OCI-LY7 (cell line): ENCODE measurements at regions of chr15 and their contacts with region 1.

Region 1: GRCh38 chr15:78195735-78196201 is 38.6 kb downstream of the ACSBG1 start:
- DNase-seq: peak; percentile 65
- H3K4me3 ChIP-seq: no peak overlapping the region
- H3K27ac ChIP-seq: no peak overlapping the region
- H3K4me1 ChIP-seq: no peaks in the 10 kb centered on the region
- CTCF ChIP-seq: peak; percentile 95

Region 2: DNA sequence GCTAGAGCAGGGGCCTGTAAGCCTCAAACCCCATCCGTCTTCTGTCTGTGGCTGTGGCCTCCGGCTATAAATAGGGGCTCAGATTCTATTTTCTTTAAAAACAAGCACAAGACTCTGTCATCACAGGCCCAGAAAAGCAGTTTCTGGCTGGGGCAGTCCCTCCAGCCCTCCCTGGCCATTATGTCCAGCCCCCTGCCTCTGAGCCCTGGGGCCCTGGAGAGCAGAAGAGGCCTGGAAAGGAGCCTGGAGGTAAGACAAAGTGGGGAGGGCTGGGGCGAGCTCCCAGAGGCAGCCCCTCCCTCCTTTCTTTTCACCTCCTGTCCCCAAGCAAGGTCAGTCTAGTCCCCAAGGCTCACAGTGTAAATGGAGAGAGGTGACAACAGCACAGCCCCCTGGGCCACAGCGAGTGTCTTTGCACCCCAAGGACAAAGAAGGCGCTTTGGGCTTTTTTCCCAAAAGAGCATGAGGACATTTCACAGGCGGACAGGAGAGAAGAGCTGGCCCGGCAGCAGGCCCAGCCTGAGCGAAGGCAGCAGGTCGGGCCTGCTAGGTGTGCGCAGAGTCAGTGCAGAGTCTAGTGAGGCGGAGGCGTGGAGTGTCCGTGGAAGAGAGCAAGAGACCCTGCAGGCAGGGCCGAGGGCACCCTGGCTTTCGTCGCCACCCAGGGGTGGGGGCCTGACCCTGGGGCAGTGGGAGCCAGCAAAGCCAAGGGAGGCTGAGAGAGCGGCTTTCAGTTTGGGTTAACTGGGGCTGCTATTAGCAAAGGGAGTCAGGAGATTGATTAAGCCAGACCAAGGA is 306.6 kb before region 1 on chr15:
- CTCF ChIA-PET with region 1: no interaction called
- POLR2A ChIA-PET with region 1: no interaction called
- intact Hi-C with region 1: no loop called
- DNase-seq: no peak
- H3K4me3 ChIP-seq: no peak overlapping the region
- H3K27ac ChIP-seq: no peak overlapping the region
- H3K4me1 ChIP-seq: no peaks in the 10 kb centered on the region
- CTCF ChIP-seq: no peak

Region 3: GRCh38 chr15:77959432-77959879 is 236.3 kb before region 1 on chr15:
- CTCF ChIA-PET with region 1: no interaction called
- POLR2A ChIA-PET with region 1: no interaction called
- intact Hi-C with region 1: loop called (anchors 1 kb)
- DNase-seq: peak; percentile 75
- H3K4me3 ChIP-seq: peak overlapping the region; percentile 34
- H3K27ac ChIP-seq: no peak overlapping the region
- H3K4me1 ChIP-seq: peaks cover 14% of the 10 kb centered on the region
- CTCF ChIP-seq: peak; percentile 93

Region 4: DNA sequence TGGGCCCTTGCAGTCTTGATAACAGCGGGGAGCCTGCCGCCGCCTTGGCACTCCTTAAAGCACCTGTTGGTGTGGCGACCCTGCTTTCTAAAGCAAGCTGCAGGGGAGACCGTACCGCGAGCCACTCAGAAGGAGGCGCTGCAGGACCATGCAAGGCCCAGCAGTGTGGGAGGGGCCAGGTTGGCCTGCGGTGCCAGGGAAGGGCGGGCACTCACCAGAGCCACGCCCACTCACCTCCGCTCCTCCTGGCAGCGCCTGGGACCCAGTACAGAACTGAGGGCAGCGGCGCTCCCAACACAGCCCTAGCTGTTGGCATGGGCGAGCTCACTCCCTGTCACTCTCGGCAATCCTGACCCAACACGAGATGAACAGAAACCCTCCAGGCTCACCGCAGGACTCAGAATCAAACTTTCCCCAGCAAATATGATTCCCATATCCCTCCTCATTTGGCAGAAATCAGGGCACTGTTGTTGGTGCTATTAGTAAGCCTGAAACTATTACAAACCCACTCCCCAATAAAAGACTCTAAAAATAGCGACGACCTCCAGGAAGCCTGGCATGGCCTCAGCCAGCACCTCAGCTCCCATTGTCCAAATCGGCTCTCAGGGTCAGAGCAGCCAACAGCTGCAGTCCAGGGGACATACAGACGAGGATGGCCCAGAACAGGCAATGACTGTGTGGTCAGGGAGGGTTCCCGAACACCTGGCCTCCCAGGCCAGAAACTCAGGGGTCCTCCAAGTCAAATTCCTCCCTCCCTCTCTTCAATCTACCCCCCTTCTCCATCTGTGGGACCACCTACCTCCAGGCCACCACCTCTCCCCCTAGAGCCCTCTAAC is 195.5 kb before region 1 on chr15:
- CTCF ChIA-PET with region 1: no interaction called
- POLR2A ChIA-PET with region 1: no interaction called
- intact Hi-C with region 1: loop called (anchors 10 kb)
- DNase-seq: peak; percentile 90
- H3K4me3 ChIP-seq: no peak overlapping the region
- H3K27ac ChIP-seq: no peak overlapping the region
- H3K4me1 ChIP-seq: peaks cover 4% of the 10 kb centered on the region
- CTCF ChIP-seq: peak; percentile 84

Region 5: DNA sequence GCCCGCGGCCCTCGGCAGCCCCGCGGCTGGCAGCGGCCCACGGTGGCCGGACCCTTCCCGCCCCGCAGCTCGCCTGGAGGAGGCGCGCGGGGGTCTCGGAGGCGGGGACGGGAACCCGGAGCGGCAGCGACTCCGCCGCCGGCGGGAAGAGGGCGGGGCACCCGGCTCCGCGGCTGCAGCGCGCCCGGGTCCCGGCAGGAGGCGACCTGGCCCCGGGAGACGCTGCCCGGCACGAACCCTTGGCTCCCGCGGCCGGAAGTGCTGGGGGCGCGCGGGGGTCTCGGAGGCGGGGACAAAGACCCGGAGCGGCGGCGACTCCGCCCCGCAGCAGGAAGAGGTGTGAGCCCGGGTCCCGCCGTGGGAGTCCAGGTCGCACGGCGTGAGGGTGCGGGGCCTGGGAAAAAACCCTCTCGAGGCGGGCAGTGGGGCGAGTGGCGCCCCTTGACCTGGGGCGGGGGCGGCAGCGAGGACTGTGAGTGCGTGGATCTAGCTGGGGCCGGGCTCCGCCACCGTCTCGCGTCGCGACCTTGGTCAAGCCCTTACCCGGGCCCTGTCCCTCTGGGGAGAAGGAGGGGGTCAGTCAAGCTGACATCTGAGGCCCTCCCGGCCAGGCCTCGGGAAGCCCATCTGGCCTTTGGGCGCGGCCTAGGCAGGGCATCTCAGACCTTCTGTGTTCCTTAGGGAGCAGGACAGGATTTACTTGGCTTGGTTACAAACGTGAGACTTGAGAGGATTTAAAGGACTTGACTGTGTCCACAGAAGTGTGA is 64.3 kb before region 1 on chr15 and contains the start of gene CIB2:
- CTCF ChIA-PET with region 1: interaction called, 14 read pairs
- POLR2A ChIA-PET with region 1: interaction called, 3 read pairs
- intact Hi-C with region 1: loop called (anchors 1 kb)
- DNase-seq: peak; percentile 86
- H3K4me3 ChIP-seq: peak within 1 kb of the TSS; percentile 80
- H3K27ac ChIP-seq: no peak within 1 kb of the TSS
- H3K4me1 ChIP-seq: peaks cover 8% of the 10 kb centered on the region
- CTCF ChIP-seq: peak; percentile 75
- total RNA-seq, gene CIB2: 2.2 and 5.0 TPM in 2 replicates

Region 6: DNA sequence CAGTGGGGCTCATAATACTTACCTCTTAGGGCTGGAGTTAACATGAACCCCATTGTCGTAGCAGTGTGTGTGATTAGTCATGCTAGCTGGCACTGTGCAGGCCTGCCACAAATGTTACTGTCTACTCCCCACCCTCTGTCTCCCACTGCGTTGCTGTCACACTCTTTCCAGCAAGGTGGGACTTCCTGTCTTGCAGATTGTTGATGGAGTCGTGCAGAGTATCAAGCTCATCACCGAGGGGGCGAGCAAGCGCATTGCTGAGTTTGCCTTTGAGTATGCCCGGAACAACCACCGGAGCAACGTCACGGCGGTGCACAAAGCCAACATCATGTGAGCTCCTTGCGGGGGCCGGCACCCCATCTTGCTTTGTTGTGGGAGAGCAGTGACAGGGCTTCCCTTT is 33.7 kb before region 1 on chr15:
- CTCF ChIA-PET with region 1: no interaction called
- POLR2A ChIA-PET with region 1: no interaction called
- intact Hi-C with region 1: no loop called
- DNase-seq: no peak
- H3K4me3 ChIP-seq: no peak overlapping the region
- H3K27ac ChIP-seq: no peak overlapping the region
- H3K4me1 ChIP-seq: peaks cover 6% of the 10 kb centered on the region
- CTCF ChIP-seq: no peak

Region 7: DNA sequence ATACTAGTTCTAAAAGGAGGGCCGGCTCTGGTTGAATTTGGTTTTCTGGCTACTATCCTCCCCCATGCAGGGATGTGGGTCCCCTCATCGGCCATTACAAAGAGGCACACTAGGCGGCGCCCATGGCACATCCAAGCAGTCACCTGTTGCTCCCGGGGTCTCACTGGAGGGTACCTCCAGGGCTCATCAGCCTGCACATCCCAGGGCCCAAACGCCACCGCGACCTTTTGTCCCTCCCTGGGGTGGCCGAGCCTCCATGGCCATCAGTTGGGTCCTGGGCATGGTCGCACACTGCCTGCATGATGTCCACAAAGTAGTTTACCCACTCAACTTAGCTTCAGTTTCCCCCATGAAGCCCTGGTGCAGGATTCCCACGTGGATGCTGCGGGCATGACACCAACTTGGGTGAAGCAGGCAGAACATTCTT is 18.3 kb before region 1 on chr15:
- CTCF ChIA-PET with region 1: interaction called, 6 read pairs
- POLR2A ChIA-PET with region 1: no interaction called
- intact Hi-C with region 1: loop called (anchors 1 kb)
- DNase-seq: peak; percentile 62
- H3K4me3 ChIP-seq: no peak overlapping the region
- H3K27ac ChIP-seq: no peak overlapping the region
- H3K4me1 ChIP-seq: peaks cover 27% of the 10 kb centered on the region
- CTCF ChIP-seq: peak; percentile 84